Left colon (tissue), 2 donors: ENCODE measurements at regions of chr9 and their contacts with region 1.

Region 1: GRCh38 chr9:12253941-12254340 is 439.2 kb upstream of the TYRP1 start:
- DNase-seq: no peak
- ATAC-seq: no peak

Region 2: GRCh38 chr9:12185856-12186255 is 68.1 kb before region 1 on chr9:
- intact Hi-C with region 1: loop called in 1 of 2 experiments (anchors 10 kb)
- DNase-seq: no peak
- ATAC-seq: no peak

Region 3: DNA sequence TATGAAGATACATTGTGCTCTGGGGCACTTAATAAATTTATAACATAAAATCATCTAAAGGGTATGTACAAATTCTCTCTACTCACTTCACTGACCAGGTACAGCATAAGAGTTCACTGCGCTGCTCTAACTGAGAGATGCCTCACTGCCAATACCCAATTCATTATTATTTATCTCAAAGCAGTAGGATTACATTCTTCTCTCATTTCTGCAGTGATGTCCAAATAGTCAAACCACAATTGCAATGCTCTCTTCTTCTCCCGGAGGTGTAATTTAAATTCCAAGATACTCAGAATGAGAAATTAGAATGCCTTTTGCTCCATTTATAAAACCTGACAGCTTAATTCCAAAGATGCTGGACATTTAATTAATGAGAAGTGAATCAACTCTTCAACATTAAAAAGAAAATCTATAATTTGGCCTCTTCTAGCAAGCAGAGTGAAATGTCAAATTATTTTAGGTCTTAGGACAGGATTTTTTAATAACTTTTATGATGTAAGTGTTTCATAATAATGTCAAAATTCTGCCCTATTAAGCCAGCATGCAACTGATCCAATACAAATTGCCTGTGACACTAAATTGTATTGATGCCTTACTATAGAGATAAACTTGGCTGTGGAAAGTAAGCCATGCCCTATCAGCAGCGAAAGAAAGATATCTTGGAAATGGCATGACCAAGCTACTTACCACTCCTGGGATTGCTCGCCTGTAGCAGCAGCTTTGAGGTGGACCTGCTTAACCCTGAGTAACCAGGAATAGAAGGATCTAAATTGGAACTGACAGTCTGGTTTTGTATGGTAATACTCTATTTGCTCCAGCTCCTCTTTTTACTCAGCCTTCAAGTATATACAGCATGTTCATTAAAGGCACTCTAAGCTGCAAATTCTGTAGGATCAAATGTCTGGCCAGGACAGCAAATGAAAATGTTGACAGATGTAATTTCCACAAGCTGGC is 65.1 kb after region 1 on chr9:
- intact Hi-C with region 1: loop called in 1 of 2 experiments (anchors 10 kb)
- DNase-seq: no peak
- ATAC-seq: no peak